AG04449 (cell line): ENCODE measurements at regions of chr19 and their contacts with region 1.

Region 1: GRCh38 chr19:48674921-48675824 is 2.4 kb upstream of the NTN5 start:
- DNase-seq: no peak
- H3K4me3 ChIP-seq: no peak overlapping the region
- CTCF ChIP-seq: peak; percentile 89

Region 2: GRCh38 chr19:48469289-48469881 is 205.8 kb before region 1 on chr19 and contains the start of gene CYTH2:
- CTCF ChIA-PET with region 1: no interaction called
- POLR2A ChIA-PET with region 1: no interaction called
- DNase-seq: no peak
- H3K4me3 ChIP-seq: peak within 1 kb of the TSS; percentile 84
- CTCF ChIP-seq: no peak

Region 3: GRCh38 chr19:48591021-48591420 is 84.2 kb before region 1 on chr19:
- CTCF ChIA-PET with region 1: no interaction called
- POLR2A ChIA-PET with region 1: no interaction called
- DNase-seq: no peak
- H3K4me3 ChIP-seq: no peak overlapping the region
- CTCF ChIP-seq: no peak

Region 4: DNA sequence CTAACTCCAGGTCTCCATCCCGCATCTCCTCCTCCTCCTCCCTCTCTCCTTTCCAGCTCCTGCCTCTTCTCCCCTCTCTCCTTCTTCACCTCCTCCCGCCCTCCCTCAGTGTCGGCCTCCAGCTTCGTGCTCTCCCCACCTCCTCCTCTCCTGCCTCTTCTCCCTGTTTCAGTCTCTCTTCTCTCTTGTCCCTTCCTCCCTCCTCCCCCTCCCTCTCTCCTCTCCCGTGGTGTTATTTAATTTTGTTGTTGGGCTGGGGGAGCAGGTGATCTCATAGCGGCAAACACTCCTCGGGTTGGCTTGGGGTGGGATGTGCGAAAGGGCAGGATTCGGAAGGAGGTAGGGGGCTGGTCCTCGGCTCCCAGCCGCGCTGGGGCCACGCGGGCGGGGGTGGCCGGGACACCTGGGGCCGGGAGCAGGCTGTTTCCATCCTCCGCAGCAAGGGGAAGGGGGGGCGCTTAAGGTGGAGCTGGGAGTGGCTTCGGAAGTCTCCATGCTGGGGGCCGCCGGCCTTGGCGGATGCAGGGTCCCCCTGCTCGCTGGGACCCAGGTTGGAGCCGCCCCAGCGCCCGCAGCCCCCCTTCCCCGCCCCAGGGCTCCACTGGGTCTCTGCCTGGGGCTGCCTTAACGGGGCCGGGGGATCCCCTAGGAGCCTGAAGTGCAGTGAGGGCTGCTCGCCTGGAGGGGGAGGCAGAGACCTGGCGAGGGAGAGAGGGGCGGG is 29.0 kb before region 1 on chr19 and contains the start of gene CA11:
- CTCF ChIA-PET with region 1: interaction called, 40 read pairs
- POLR2A ChIA-PET with region 1: no interaction called
- DNase-seq: no peak
- H3K4me3 ChIP-seq: peak within 1 kb of the TSS; percentile 57
- CTCF ChIP-seq: peak; percentile 95

Region 5: GRCh38 chr19:48689449-48689848 is 14.3 kb after region 1 on chr19:
- CTCF ChIA-PET with region 1: interaction called, 29 read pairs
- POLR2A ChIA-PET with region 1: interaction called, 3 read pairs
- DNase-seq: no peak
- H3K4me3 ChIP-seq: no peak overlapping the region
- CTCF ChIP-seq: no peak

Region 6: GRCh38 chr19:48713864-48714758 is 38.9 kb after region 1 on chr19:
- CTCF ChIA-PET with region 1: interaction called, 23 read pairs
- POLR2A ChIA-PET with region 1: no interaction called
- DNase-seq: peak; percentile 93
- H3K4me3 ChIP-seq: peak overlapping the region; percentile 82
- CTCF ChIP-seq: no peak

Region 7: GRCh38 chr19:48738557-48739399 is 63.6 kb after region 1 on chr19:
- CTCF ChIA-PET with region 1: interaction called, 23 read pairs
- POLR2A ChIA-PET with region 1: no interaction called
- DNase-seq: no peak
- H3K4me3 ChIP-seq: peak overlapping the region; percentile 42
- CTCF ChIP-seq: peak; percentile 12

Region 8: DNA sequence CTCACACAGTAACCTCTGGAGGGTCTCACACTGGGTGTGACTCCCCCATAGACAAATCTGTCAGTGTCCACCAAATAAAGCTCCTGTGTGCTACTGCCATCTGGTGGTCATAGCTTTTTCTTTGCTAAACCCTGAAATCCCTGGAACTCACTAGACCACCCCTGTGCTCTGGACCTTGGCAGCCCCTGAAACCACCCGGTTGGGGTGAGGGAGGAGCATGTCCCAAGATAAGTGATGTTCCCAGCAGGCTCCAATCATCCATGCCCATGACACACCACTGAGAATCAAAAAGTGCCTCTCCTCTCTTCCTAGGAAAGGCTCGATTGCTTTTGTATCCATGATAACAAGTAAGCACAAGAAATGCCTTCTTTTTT is 167.6 kb after region 1 on chr19:
- CTCF ChIA-PET with region 1: interaction called, 24 read pairs
- POLR2A ChIA-PET with region 1: no interaction called
- DNase-seq: no peak
- H3K4me3 ChIP-seq: no peak overlapping the region
- CTCF ChIP-seq: peak; percentile 50

Region 9: GRCh38 chr19:48933382-48933932 is 258.3 kb after region 1 on chr19 and contains the start of gene DHDH:
- CTCF ChIA-PET with region 1: no interaction called
- POLR2A ChIA-PET with region 1: no interaction called
- DNase-seq: no peak
- H3K4me3 ChIP-seq: peak within 1 kb of the TSS; percentile 65
- CTCF ChIP-seq: no peak